ENCODE measurements at regions of chr1 and their contacts with region 1.

Region 1: GRCh38 chr1:26695356-26696118 is at the start of gene ARID1A:
- DNase-seq: peak; percentile 86 to 95 (median 92)
- H3K4me3 ChIP-seq: peak within 1 kb of the TSS; percentile 65 to 97 (median 89)
- H3K27ac ChIP-seq: peak within 1 kb of the TSS; percentile 87 to 100 (median 98)
- H3K27me3 ChIP-seq: no peaks in the 10 kb centered on the region
- CTCF ChIP-seq: peak in 45 of 56 donors; percentile 15 to 56 (median 35)
- total RNA-seq, gene ARID1A: 65.3 to 158 (median 93.3) TPM

Region 2: DNA sequence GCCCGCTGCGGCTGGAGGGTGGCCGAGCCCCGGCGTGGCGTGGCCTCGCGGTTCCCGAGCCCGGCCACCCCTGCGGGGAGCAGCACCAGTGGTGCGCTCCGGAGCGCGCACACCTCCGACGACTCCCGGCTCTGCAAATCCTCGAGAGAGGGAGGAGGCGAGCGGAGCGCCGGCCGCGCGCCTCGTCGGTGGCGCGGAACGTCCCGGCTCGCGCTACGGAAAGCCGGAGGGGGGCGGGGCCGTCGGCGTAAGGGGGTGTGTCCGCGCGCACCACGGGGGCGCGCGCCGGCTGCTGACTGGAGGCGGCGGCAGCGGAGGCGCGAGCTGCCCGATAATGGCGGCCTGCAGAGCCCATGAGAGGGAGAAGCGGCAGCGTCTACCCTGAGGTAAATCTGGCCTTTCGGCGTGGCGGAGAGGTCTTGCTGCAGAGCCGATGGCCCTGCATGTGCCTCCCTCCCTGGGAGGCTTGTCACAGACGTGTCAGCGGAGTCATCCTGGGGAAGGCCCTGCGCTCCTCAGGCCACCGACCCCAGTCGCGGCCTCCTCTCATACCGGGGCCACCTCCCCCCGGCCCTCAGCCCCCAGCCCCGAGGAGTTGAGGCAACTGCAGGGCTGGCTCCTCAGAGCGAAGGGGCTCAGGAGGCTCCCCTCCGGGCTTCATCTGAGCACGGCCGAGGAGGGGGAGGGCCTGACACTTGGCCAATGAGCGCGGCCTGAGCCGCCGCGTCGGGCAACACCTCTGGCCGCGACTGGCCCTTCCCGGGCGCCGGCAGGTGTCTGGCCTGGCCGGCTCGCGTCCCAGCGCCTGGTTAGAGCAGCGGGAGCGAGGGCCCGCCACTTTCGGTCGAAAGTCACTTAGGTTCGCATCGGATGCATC is 583.8 kb before region 1 on chr1 and contains the start of gene PDIK1L:
- intact Hi-C with region 1: loop called in 1 of 2 experiments (anchors 5 kb)
- DNase-seq: peak; percentile 78 to 94 (median 88)
- H3K4me3 ChIP-seq: peak within 1 kb of the TSS; percentile 68 to 100 (median 98)
- H3K27ac ChIP-seq: peak within 1 kb of the TSS; percentile 89 to 99 (median 97)
- H3K27me3 ChIP-seq: no peaks in the 10 kb centered on the region
- CTCF ChIP-seq: peak in 20 of 56 donors; percentile 8 to 51 (median 30)
- total RNA-seq, gene PDIK1L: 6.9 to 24.8 (median 16.2) TPM

Region 3: GRCh38 chr1:26472901-26473845 is 222.4 kb before region 1 on chr1:
- intact Hi-C with region 1: loop called in 1 of 2 experiments (anchors 10 kb)
- DNase-seq: peak; percentile 94 to 99 (median 96)
- H3K4me3 ChIP-seq: peak overlapping the region; percentile 55 to 100 (median 96)
- H3K27ac ChIP-seq: peak overlapping the region; percentile 97 to 100 (median 100)
- H3K27me3 ChIP-seq: no peaks in the 10 kb centered on the region
- CTCF ChIP-seq: peak in 20 of 56 donors; percentile 9 to 44 (median 21)

Region 4: GRCh38 chr1:26555550-26556510 is 139.7 kb before region 1 on chr1:
- intact Hi-C with region 1: loop called in 1 of 2 experiments (anchors 5 kb)
- DNase-seq: peak; percentile 40 to 97 (median 93)
- H3K4me3 ChIP-seq: no peak overlapping the region
- H3K27ac ChIP-seq: peak overlapping the region; percentile 65 to 100 (median 97)
- H3K27me3 ChIP-seq: no peaks in the 10 kb centered on the region
- CTCF ChIP-seq: peak in 10 of 56 donors; percentile 11 to 34 (median 24)

Region 5: DNA sequence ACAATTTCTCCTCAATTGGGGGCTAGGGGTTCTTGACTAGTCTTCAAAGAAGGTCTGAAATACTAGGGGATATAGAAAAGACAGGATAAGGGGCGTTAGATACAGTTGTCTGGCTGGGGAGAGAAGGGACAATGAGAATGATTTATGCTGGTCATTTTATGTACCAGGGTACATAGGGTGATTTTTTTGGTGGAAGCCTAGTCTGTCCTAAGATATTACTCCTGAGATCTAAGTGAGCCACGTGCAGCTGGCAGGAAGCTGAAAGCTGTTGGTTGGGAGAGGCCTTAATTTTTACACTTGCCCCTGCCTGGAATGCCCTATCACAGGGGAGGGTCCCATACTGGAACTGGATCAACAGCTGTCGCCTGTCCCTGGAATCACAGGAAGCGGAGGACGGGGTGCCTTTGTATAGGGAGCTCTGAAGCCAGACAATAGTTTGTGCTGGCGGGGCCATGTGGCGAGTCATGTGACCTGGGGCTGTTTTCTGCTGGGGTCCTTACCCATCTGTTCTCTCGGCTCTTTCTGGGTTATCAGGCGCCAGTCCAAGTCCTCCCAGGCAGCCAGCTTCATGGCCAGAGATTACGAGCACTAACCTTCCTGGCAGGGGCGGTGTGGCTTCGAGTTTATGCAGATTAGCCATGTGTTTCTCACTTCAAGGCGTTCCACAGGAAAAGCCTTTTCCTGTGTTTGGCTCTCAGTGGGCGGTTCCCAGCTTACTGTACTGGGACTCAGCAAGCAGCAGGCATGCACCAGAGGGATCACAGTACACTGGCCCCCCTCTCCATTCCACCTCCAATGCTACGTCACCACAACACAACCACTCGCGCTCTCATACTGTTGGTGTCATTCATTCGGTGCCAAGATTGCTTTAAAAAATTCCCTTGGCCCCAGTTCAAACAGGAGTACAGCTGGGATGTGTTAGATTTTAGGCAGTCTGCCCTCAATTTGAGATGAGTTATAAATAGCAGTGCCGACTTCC is 27.8 kb after region 1 on chr1:
- intact Hi-C with region 1: loop called in 1 of 2 experiments (anchors 2 kb)
- DNase-seq: peak; percentile 58 to 96 (median 77)
- H3K4me3 ChIP-seq: peak overlapping the region in 41 of 59 donors; percentile 1 to 48 (median 17)
- H3K27ac ChIP-seq: peak overlapping the region in 50 of 59 donors; percentile 0 to 77 (median 45)
- H3K27me3 ChIP-seq: no peaks in the 10 kb centered on the region
- CTCF ChIP-seq: peak in 8 of 56 donors; percentile 6 to 21 (median 8)

Region 6: GRCh38 chr1:26787706-26788514 is 92.4 kb after region 1 on chr1 and contains the start of gene PIGV:
- intact Hi-C with region 1: loop called (anchors 1 kb)
- DNase-seq: peak; percentile 75 to 90 (median 84)
- H3K4me3 ChIP-seq: peak within 1 kb of the TSS; percentile 65 to 98 (median 87)
- H3K27ac ChIP-seq: peak within 1 kb of the TSS; percentile 95 to 100 (median 100)
- H3K27me3 ChIP-seq: no peaks in the 10 kb centered on the region
- CTCF ChIP-seq: peak in 50 of 56 donors; percentile 10 to 63 (median 44)
- total RNA-seq, gene PIGV: 9.1 to 22.9 (median 14.3) TPM